CD8-positive, alpha-beta T cell (primary cell): ENCODE measurements at regions of chr14 and their contacts with region 1.

Region 1: GRCh38 chr14:49767562-49768300 is at the start of gene KLHDC2:
- DNase-seq: peak; percentile 74 to 94 (median 87)
- ATAC-seq: peak; percentile 65
- H3K4me3 ChIP-seq: peak within 1 kb of the TSS; percentile 79 to 99
- H3K4me3 Mint-ChIP-seq: peak within 1 kb of the TSS; percentile 98
- H3K27ac ChIP-seq: peak within 1 kb of the TSS; percentile 94 to 97
- H3K27ac Mint-ChIP-seq: peak within 1 kb of the TSS; percentile 100
- H3K4me1 ChIP-seq: peaks cover 29% of the 10 kb centered on the region
- H3K4me1 Mint-ChIP-seq: peaks cover 38% of the 10 kb centered on the region
- H3K27me3 ChIP-seq: no peaks in the 10 kb centered on the region
- H3K27me3 Mint-ChIP-seq: no peaks in the 10 kb centered on the region
- CTCF ChIP-seq: peak; percentile 22
- total RNA-seq, gene KLHDC2: 121 to 122 TPM

Region 2: GRCh38 chr14:49585803-49586672 is 181.7 kb before region 1 on chr14 and contains the start of gene RPS29:
- CTCF ChIA-PET with region 1: interaction called, 3 read pairs
- POLR2A ChIA-PET with region 1: interaction called, 22 read pairs
- intact Hi-C with region 1: loop called (anchors 2 kb)
- DNase-seq: peak; percentile 97 to 100 (median 98)
- ATAC-seq: peak; percentile 82
- H3K4me3 ChIP-seq: peak within 1 kb of the TSS; percentile 81 to 98
- H3K4me3 Mint-ChIP-seq: peak within 1 kb of the TSS; percentile 91
- H3K27ac ChIP-seq: peak within 1 kb of the TSS; percentile 97 to 98
- H3K27ac Mint-ChIP-seq: peak within 1 kb of the TSS; percentile 98
- H3K4me1 ChIP-seq: peaks cover 33% of the 10 kb centered on the region
- H3K4me1 Mint-ChIP-seq: peaks cover 48% of the 10 kb centered on the region
- H3K27me3 ChIP-seq: no peaks in the 10 kb centered on the region
- H3K27me3 Mint-ChIP-seq: no peaks in the 10 kb centered on the region
- CTCF ChIP-seq: no peak
- total RNA-seq, gene RPS29: 3,843 to 3,876 TPM

Region 3: DNA sequence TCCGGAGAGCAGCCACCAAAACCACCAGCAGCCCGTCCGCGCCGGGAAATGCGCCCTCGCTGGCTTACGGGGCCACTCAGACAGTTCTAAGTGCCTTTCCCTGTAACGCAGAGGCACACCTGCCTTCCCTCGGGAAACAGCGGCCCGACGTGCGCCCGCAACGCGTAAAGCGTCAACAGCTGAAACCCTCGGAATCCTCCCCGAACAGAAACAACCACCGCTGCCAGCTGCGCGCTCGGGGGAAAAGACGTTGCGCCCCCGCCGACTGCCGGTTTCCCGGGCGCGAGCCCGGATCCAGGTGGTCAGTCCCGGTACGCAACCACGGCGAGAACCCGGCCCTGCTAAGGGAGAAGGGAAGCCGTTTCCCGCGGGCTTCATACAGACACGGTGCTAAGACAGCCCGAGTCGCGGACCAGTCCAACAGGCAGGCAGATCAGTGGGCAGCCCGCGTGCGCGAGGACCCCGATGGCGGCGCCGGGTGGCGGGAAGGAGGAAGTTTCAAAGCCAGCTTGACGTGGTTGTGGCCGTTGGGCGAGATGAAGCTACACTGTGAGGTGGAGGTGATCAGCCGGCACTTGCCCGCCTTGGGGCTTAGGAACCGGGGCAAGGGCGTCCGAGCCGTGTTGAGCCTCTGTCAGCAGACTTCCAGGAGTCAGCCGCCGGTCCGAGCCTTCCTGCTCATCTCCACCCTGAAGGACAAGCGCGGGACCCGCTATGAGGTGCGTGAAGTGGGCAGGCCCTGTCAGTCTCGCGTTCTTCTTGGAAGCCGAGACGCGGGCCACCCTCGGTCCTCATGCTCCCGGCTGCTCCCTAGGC is 169.0 kb before region 1 on chr14 and contains the start of gene LRR1:
- CTCF ChIA-PET with region 1: no interaction called
- POLR2A ChIA-PET with region 1: interaction called, 8 read pairs
- intact Hi-C with region 1: loop called in 1 of 2 experiments (anchors 1 kb)
- DNase-seq: peak; percentile 79 to 91 (median 84)
- ATAC-seq: peak; percentile 86
- H3K4me3 ChIP-seq: peak within 1 kb of the TSS; percentile 84 to 99
- H3K4me3 Mint-ChIP-seq: peak within 1 kb of the TSS; percentile 99
- H3K27ac ChIP-seq: peak within 1 kb of the TSS; percentile 92 to 95
- H3K27ac Mint-ChIP-seq: peak within 1 kb of the TSS; percentile 100
- H3K4me1 ChIP-seq: peaks cover 12% of the 10 kb centered on the region
- H3K4me1 Mint-ChIP-seq: peaks cover 31% of the 10 kb centered on the region
- H3K27me3 ChIP-seq: no peaks in the 10 kb centered on the region
- H3K27me3 Mint-ChIP-seq: no peaks in the 10 kb centered on the region
- CTCF ChIP-seq: no peak
- total RNA-seq, gene LRR1: 6.2 to 7.3 TPM

Region 4: GRCh38 chr14:49620182-49621113 is 147.3 kb before region 1 on chr14 and contains the starts of genes MGAT2 and RPL36AL:
- CTCF ChIA-PET with region 1: interaction called, 7 read pairs
- POLR2A ChIA-PET with region 1: interaction called, 33 read pairs
- intact Hi-C with region 1: loop called in 1 of 2 experiments (anchors 1 kb)
- DNase-seq: peak; percentile 85 to 97 (median 93)
- ATAC-seq: peak; percentile 79
- H3K4me3 ChIP-seq: peak within 1 kb of the TSS; percentile 94 to 95
- H3K4me3 Mint-ChIP-seq: peak within 1 kb of the TSS; percentile 97
- H3K27ac ChIP-seq: peak within 1 kb of the TSS; percentile 98 to 99
- H3K27ac Mint-ChIP-seq: peak within 1 kb of the TSS; percentile 100
- H3K4me1 ChIP-seq: peaks cover 40% of the 10 kb centered on the region
- H3K4me1 Mint-ChIP-seq: peaks cover 62% of the 10 kb centered on the region
- H3K27me3 ChIP-seq: no peaks in the 10 kb centered on the region
- H3K27me3 Mint-ChIP-seq: no peaks in the 10 kb centered on the region
- CTCF ChIP-seq: no peak
- total RNA-seq, gene MGAT2: 22.6 to 24.0 TPM
- total RNA-seq, gene RPL36AL: 302 to 318 TPM

Region 5: GRCh38 chr14:49692811-49693734 is 74.7 kb before region 1 on chr14 and contains the start of gene KLHDC1:
- CTCF ChIA-PET with region 1: interaction called, 3 read pairs
- POLR2A ChIA-PET with region 1: interaction called, 18 read pairs
- intact Hi-C with region 1: loop called (anchors 1 to 2 kb)
- DNase-seq: peak; percentile 56 to 90 (median 81)
- ATAC-seq: peak; percentile 84
- H3K4me3 ChIP-seq: peak within 1 kb of the TSS; percentile 49 to 63
- H3K4me3 Mint-ChIP-seq: peak within 1 kb of the TSS; percentile 78
- H3K27ac ChIP-seq: peak within 1 kb of the TSS; percentile 59 to 82
- H3K27ac Mint-ChIP-seq: peak within 1 kb of the TSS; percentile 90
- H3K4me1 ChIP-seq: peaks cover 15% of the 10 kb centered on the region
- H3K4me1 Mint-ChIP-seq: peaks cover 34% of the 10 kb centered on the region
- H3K27me3 ChIP-seq: no peaks in the 10 kb centered on the region
- H3K27me3 Mint-ChIP-seq: no peaks in the 10 kb centered on the region
- CTCF ChIP-seq: no peak
- total RNA-seq, gene KLHDC1: 8.5 to 11.0 TPM

Region 6: GRCh38 chr14:49786315-49787110 is 18.8 kb after region 1 on chr14:
- CTCF ChIA-PET with region 1: no interaction called
- POLR2A ChIA-PET with region 1: interaction called, 20 read pairs
- intact Hi-C with region 1: no loop called
- DNase-seq: no peak
- ATAC-seq: no peak
- H3K4me3 ChIP-seq: no peak overlapping the region
- H3K4me3 Mint-ChIP-seq: no peak overlapping the region
- H3K27ac ChIP-seq: no peak overlapping the region
- H3K27ac Mint-ChIP-seq: peak overlapping the region; percentile 15
- H3K4me1 ChIP-seq: no peaks in the 10 kb centered on the region
- H3K4me1 Mint-ChIP-seq: peaks cover 2% of the 10 kb centered on the region
- H3K27me3 ChIP-seq: no peaks in the 10 kb centered on the region
- H3K27me3 Mint-ChIP-seq: no peaks in the 10 kb centered on the region
- CTCF ChIP-seq: no peak

Region 7: GRCh38 chr14:49816844-49817243 is 49.1 kb after region 1 on chr14:
- CTCF ChIA-PET with region 1: no interaction called
- POLR2A ChIA-PET with region 1: no interaction called
- intact Hi-C with region 1: no loop called
- DNase-seq: no peak
- ATAC-seq: no peak
- H3K4me3 ChIP-seq: no peak overlapping the region
- H3K4me3 Mint-ChIP-seq: no peak overlapping the region
- H3K27ac ChIP-seq: no peak overlapping the region
- H3K27ac Mint-ChIP-seq: no peak overlapping the region
- H3K4me1 ChIP-seq: no peaks in the 10 kb centered on the region
- H3K4me1 Mint-ChIP-seq: no peaks in the 10 kb centered on the region
- H3K27me3 ChIP-seq: no peaks in the 10 kb centered on the region
- H3K27me3 Mint-ChIP-seq: no peaks in the 10 kb centered on the region
- CTCF ChIP-seq: no peak

Region 8: GRCh38 chr14:50018201-50018932 is 250.6 kb after region 1 on chr14:
- CTCF ChIA-PET with region 1: no interaction called
- POLR2A ChIA-PET with region 1: no interaction called
- intact Hi-C with region 1: no loop called
- DNase-seq: no peak
- ATAC-seq: no peak
- H3K4me3 ChIP-seq: no peak overlapping the region
- H3K4me3 Mint-ChIP-seq: no peak overlapping the region
- H3K27ac ChIP-seq: no peak overlapping the region
- H3K27ac Mint-ChIP-seq: no peak overlapping the region
- H3K4me1 ChIP-seq: peaks cover 11% of the 10 kb centered on the region
- H3K4me1 Mint-ChIP-seq: peaks cover 22% of the 10 kb centered on the region
- H3K27me3 ChIP-seq: no peaks in the 10 kb centered on the region
- H3K27me3 Mint-ChIP-seq: no peaks in the 10 kb centered on the region
- CTCF ChIP-seq: no peak

Region 9: GRCh38 chr14:50116181-50116956 is 348.6 kb after region 1 on chr14 and contains the start of gene VCPKMT:
- CTCF ChIA-PET with region 1: no interaction called
- POLR2A ChIA-PET with region 1: interaction called, 10 read pairs
- intact Hi-C with region 1: loop called (anchors 1 kb)
- DNase-seq: peak; percentile 91 to 98 (median 96)
- ATAC-seq: peak; percentile 97
- H3K4me3 ChIP-seq: peak within 1 kb of the TSS; percentile 69 to 92
- H3K4me3 Mint-ChIP-seq: peak within 1 kb of the TSS; percentile 98
- H3K27ac ChIP-seq: peak within 1 kb of the TSS; percentile 85 to 86
- H3K27ac Mint-ChIP-seq: peak within 1 kb of the TSS; percentile 99
- H3K4me1 ChIP-seq: peaks cover 20% of the 10 kb centered on the region
- H3K4me1 Mint-ChIP-seq: peaks cover 28% of the 10 kb centered on the region
- H3K27me3 ChIP-seq: no peaks in the 10 kb centered on the region
- H3K27me3 Mint-ChIP-seq: no peaks in the 10 kb centered on the region
- CTCF ChIP-seq: no peak
- total RNA-seq, gene VCPKMT: 38.2 to 39.6 TPM